Left ventricle myocardium inferior (tissue), 1 donor: ENCODE measurements at regions of chr22 and their contacts with region 1.

Region 1: DNA sequence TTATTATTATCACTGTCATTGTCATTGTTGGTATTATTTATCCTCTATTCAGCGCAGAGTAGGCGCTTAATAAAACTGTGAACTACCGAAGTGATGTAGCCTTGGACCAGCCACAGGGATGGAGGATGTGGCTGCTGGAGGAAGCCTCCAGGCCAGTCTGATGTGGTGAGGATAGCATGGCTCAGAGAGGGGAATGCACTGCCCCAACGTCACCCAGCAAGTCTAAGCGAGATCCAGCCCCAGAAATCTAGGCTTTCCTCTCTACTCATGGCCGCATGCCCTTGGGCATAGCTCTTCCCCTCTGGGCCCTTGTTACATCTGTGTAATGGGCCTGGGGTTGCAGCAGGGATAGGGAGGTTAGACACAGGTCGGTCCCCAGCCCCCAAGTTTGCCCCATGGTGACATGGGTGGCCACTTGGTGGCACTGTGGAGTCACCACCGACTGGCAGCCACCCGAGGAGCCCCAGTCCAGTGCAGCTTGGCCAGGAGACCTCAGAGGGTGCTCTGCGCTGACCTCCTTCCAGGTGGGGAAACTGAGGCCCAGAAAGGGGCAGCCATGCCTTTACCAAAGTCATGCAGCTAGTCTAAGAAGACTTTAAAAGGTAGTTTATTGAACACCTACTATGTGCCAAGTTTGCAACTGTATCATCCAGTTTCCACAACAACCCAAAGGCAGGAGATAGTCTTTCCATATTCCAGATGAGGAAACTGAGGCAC is 395.7 kb downstream of the MN1 start:
- DNase-seq: peak; percentile 53
- H3K4me3 ChIP-seq: no peak overlapping the region
- H3K27ac ChIP-seq: no peak overlapping the region
- H3K4me1 ChIP-seq: no peaks in the 10 kb centered on the region
- H3K27me3 ChIP-seq: peaks cover 55% of the 10 kb centered on the region
- CTCF ChIP-seq: peak; percentile 83

Region 2: DNA sequence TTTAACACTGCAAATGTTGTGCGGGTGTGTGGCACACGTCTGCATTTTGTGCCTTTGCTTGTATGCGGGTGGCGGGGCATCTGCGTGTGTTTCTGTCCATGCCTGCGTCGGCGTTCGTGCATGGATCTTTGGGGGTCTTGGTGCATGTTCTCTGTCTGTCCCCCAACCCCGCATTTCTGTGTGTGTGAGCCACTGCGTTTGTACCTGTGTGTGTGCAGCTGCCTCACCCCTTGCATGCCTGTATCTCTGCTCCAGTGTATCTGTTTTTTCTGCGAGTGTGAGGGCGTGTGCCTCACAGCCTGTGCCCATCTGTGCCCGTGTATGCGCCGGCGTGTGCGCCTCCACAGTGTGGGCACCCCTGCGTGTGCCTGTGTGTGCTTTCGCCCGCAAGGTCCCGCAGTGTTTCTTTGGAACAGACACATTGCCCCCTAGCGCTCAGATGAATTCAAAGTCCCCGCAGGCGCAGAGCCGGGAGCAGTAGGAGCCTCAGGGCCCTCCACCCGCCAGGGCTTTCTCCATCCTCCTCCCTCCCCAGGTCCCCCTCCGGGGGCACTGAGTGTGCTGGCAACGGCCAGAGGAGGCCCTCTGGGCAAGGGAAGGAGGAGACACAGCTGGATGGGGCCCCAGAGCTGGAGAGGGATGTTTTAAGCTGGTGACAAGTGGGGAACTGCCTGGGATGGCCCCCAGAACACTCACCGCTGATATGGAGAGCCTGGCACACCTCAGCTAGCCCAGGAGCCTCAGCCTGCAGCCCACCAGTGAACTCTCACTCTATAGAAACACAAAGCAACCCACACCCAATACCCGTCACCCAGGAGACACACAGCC is 398.9 kb after region 1 on chr22:
- intact Hi-C with region 1: loop called (anchors 5 kb)
- DNase-seq: peak; percentile 66
- H3K4me3 ChIP-seq: no peak overlapping the region
- H3K27ac ChIP-seq: no peak overlapping the region
- H3K4me1 ChIP-seq: peaks cover 42% of the 10 kb centered on the region
- H3K27me3 ChIP-seq: peaks cover 16% of the 10 kb centered on the region
- CTCF ChIP-seq: peak; percentile 83